ENCODE measurements at regions of chr10 and their contacts with region 1.

Region 1: GRCh38 chr10:3623746-3624145 is 161.3 kb downstream of the KLF6 start:
- DNase-seq: no peak
- H3K4me3 Mint-ChIP-seq: no peak overlapping the region
- H3K27ac Mint-ChIP-seq: peak overlapping the region; percentile 83
- H3K4me1 Mint-ChIP-seq: peaks cover 28% of the 10 kb centered on the region
- H3K27me3 Mint-ChIP-seq: no peaks in the 10 kb centered on the region

Region 2: DNA sequence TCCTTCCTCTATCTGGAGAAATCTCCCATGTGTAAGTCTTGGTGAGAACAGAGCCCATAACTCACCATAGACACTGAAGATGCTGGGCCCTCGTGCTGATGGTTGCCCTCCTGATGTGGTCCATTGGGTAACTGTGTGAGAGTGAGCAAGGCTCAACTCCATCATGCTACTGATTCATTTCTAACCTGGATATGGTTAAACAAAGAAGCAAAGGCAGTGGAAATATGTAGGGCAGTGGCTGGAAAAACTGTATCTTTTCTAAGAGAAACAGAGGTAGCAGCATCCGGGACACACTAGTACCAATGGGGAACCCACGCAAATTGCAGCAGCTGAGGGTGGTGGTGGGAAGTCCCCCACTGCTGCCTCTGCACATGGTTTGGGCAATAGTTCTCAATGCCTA is 60.4 kb before region 1 on chr10:
- CTCF ChIA-PET with region 1: no interaction called
- POLR2A ChIA-PET with region 1: no interaction called
- intact Hi-C with region 1: loop called (anchors 1 kb)
- DNase-seq: peak; percentile 82
- H3K4me3 Mint-ChIP-seq: no peak overlapping the region
- H3K27ac Mint-ChIP-seq: peak overlapping the region; percentile 35
- H3K4me1 Mint-ChIP-seq: peaks cover 27% of the 10 kb centered on the region
- H3K27me3 Mint-ChIP-seq: no peaks in the 10 kb centered on the region

Region 3: DNA sequence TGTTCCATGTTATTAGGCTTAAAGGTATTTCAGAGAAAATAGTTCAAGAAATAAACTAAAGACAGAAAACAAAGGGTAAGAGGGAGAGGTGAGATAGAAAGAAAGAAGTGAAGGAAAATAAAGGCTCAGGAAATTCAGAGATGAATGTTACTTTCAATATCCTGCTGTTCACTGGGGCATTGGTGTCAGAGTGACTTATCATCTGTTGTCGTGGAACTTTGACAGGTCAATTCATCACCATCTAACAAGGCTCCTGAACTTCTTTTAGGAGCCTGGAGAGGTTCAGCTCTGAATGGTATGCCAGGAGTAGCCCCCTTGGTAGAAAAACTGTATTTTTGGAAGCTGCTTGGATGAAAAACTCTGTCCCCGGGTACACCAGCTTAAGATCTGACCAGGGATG is 61.1 kb after region 1 on chr10:
- CTCF ChIA-PET with region 1: no interaction called
- POLR2A ChIA-PET with region 1: no interaction called
- intact Hi-C with region 1: loop called (anchors 2 kb)
- DNase-seq: no peak
- H3K4me3 Mint-ChIP-seq: no peak overlapping the region
- H3K27ac Mint-ChIP-seq: no peak overlapping the region
- H3K4me1 Mint-ChIP-seq: peaks cover 18% of the 10 kb centered on the region
- H3K27me3 Mint-ChIP-seq: no peaks in the 10 kb centered on the region

Region 4: DNA sequence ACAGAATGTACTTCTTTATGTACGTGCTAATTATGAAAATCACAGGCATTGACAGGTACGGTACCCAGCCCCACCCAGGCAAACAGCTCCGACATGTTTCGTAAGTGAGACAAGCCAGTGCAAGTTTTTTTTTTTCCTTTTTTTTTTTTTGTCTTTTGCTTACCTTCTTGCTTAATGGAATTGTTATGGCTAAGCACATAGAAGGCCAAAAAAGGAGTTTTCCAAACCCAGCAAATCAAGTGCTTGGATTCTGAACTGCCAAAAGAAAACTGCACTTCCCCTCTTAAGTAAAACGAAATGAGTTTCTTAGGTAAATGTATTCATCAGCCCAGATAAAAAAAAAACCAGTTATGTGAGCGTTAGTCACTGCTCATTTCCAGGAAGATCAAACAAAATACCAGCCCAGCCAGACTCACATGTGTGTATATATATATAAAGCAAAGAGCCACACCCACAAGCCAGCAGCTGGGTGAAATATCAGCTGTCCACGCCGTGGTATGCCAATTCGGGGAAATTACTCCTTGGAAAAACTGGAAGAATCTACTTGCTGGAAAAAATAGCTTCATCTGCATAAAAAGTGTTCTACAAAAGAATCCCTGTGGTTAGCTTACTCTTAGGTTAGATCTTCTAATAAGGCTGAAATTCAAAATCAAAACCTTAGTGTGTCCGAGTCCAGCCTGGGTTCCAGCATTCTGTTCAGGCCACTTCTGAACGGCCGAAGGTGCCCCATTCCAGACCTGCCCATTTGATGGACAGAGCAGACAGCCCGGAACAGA is 153.2 kb after region 1 on chr10:
- CTCF ChIA-PET with region 1: interaction called, 3 read pairs
- POLR2A ChIA-PET with region 1: interaction called, 10 read pairs
- intact Hi-C with region 1: loop called (anchors 1 kb)
- DNase-seq: peak; percentile 70
- H3K4me3 Mint-ChIP-seq: peak overlapping the region; percentile 67
- H3K27ac Mint-ChIP-seq: peak overlapping the region; percentile 83
- H3K4me1 Mint-ChIP-seq: peaks cover 77% of the 10 kb centered on the region
- H3K27me3 Mint-ChIP-seq: no peaks in the 10 kb centered on the region

Region 5: DNA sequence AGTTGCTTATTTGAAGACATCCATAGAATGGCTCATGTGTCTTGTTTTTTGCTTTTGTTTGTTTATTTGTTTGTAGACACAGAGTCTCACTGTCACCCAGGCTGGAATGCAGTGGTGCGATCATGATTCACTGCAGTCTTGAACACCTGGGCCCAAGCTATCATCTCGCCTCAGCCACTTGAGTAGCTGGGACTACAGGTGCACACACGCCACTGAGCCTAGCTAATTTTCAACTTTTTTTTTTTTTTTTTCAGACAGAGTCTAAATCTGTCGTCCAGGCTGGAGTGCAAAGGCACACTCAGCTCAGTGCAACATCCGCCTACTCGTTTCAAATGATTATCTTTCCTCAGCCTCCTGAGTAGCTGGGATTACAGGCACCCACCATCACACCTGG is 244.5 kb after region 1 on chr10:
- CTCF ChIA-PET with region 1: no interaction called
- POLR2A ChIA-PET with region 1: no interaction called
- intact Hi-C with region 1: loop called (anchors 2 kb)
- DNase-seq: no peak
- H3K4me3 Mint-ChIP-seq: no peak overlapping the region
- H3K27ac Mint-ChIP-seq: peak overlapping the region; percentile 93
- H3K4me1 Mint-ChIP-seq: peaks cover 76% of the 10 kb centered on the region
- H3K27me3 Mint-ChIP-seq: no peaks in the 10 kb centered on the region

Region 6: GRCh38 chr10:4344511-4344994 is 720.8 kb after region 1 on chr10:
- CTCF ChIA-PET with region 1: no interaction called
- POLR2A ChIA-PET with region 1: no interaction called
- intact Hi-C with region 1: loop called (anchors 10 kb)
- DNase-seq: peak; percentile 70
- H3K4me3 Mint-ChIP-seq: no peak overlapping the region
- H3K27ac Mint-ChIP-seq: peak overlapping the region; percentile 30
- H3K4me1 Mint-ChIP-seq: peaks cover 23% of the 10 kb centered on the region
- H3K27me3 Mint-ChIP-seq: no peaks in the 10 kb centered on the region

Measured in activated CD4-positive, alpha-beta memory T cell treated with anti-CD3 and anti-CD28 coated beads for 36 hours (primary cell).